Motor neuron (in vitro differentiated cells): ENCODE measurements at regions of chr12 and their contacts with region 1.

Region 1: DNA sequence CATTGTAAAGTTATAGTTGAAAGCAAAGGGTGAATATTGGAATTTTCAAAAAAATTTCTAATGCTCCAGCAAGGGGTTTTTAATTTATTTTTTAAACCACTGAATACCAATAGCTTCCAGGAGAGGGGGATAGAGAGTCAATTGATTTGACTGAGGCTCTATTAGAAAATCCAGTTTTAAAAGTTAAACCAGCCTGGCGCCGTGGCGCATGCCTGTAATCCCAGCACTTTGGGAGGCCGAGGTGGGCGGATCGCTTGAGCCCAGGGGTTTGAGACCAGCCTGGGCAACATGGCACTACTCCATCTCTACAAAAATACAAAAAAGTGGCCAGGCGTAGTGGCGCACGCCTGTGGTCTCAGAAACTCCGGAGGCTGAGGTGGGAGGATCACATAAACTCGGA is 150.1 kb downstream of the SLC38A4 start:
- ATAC-seq: peak in 1 of 8 experiments; percentile 20
- H3K4me3 ChIP-seq: no peak overlapping the region
- H3K27ac ChIP-seq: no peak overlapping the region
- H3K4me1 ChIP-seq: no peaks in the 10 kb centered on the region

Region 2: GRCh38 chr12:46473634-46474329 is 202.0 kb before region 1 on chr12:
- in situ Hi-C with region 1: no loop called
- ATAC-seq: peak in 6 of 8 experiments; percentile 19 to 80 (median 69)
- H3K4me3 ChIP-seq: no peak overlapping the region
- H3K27ac ChIP-seq: no peak overlapping the region
- H3K4me1 ChIP-seq: no peaks in the 10 kb centered on the region

Region 3: DNA sequence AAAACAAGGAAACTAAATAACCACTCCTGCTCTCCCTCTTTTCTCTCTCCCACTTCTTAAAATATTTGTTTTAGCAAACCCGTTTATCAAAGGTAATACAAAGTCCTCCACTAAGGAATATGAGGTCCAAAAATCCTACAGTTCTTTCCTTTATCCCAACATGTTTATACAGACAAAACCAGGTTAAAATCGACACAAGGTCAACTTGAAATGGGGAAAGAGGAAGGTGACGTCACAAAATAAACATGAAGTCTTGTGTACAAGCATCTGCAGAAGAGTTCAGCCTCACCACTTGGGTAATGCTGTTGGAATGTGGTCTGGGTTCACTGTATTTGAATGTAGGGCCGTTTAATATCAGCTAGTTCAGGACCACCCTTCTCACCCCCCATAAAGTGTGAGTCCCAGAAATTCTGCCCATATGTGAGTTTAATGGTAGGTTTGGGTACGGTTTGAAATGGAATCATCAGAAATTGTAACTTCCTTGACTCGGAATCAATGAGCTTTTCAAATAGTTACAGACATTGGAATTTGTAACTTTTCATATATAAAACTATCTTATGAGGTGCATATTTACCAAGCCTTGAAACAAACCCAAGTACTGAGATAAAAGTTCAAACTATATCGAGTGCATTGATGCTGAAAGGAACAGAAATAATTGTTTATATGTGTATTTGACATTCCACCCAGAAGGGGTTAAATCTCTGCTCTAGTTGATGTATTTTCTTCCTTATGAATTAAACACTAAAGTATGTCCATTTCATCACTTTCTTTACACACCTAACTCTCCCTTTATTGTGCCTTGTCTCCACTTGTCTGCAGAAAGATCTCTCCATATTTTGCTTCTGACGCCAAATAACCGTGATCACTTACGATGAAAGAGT is 183.0 kb before region 1 on chr12:
- in situ Hi-C with region 1: no loop called
- ATAC-seq: peak in 1 of 8 experiments; percentile 57
- H3K4me3 ChIP-seq: no peak overlapping the region
- H3K27ac ChIP-seq: no peak overlapping the region
- H3K4me1 ChIP-seq: no peaks in the 10 kb centered on the region

Region 4: DNA sequence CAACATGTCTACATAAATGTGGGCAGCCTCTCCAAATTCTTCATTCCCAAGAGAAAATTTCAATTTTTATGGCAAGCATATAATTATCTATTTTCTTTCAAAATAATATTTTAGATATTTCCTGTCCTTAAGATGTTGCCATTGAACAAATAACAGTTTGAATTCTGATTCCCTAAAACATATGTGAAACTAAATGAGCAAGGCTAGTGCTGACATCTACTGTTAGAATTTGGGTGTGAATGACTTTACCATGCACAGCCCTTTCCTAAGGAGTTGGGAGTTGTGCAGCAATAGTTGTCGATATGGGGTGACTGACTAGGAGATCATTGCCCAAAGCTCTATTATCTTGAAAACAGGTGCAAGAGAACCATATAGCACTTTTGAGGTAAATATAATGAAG is 258.2 kb after region 1 on chr12:
- in situ Hi-C with region 1: loop called in 3 of 9 experiments (anchors 10 to 25 kb)
- ATAC-seq: peak in 5 of 8 experiments; percentile 32 to 82 (median 79)
- H3K4me3 ChIP-seq: no peak overlapping the region
- H3K27ac ChIP-seq: no peak overlapping the region
- H3K4me1 ChIP-seq: no peaks in the 10 kb centered on the region

Region 5: GRCh38 chr12:47021298-47021697 is 345.6 kb after region 1 on chr12:
- in situ Hi-C with region 1: loop called in 1 of 9 experiments (anchors 25 kb)
- ATAC-seq: peak; percentile 26 to 92 (median 54)
- H3K4me3 ChIP-seq: no peak overlapping the region
- H3K27ac ChIP-seq: no peak overlapping the region
- H3K4me1 ChIP-seq: no peaks in the 10 kb centered on the region